Panc1 (cell line): ENCODE measurements at regions of chr7 and their contacts with region 1.

Region 1: DNA sequence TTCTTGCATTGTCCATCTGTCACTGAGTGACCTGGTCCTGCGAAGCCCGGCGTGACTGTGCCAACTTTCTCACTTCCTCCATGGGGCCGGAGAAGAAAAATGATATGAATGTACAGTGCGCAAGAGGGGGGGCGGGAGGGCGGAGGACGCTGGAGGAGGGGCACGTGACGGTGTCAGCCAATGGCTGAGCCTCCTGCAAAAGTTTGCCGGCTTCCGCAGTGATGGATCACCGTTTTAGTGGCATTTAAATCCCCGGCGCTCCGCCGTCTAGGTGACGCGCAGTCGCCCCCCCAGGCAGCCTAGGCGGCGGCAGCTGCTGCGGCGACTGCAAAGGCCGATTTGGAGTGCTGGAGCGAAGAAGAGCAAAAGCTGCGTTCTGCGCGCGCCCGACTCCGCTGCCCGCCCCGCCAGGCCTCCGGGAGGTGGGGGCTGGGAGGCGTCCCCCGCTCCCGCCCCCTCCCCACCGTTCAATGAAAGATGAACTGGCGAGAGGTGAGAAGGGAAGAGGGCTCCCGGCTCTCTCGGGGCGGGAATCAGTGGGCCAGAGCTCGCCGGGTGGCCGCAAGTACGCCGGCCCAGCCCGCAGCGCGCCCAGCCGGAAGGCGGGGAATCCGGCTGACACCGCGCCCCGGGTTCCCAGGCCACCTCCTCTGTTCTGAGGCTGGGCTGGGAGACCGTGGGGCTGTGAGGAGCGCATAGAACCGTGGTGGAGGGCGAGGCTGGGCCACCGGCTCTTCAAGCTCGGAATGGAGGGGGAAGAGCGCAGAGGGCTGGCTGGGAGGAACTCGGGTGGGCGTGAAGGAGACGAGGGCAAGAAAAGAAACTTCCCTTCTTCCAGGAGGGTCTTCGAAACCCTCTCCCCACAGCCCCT is at the start of gene HOXA1:
- DNase-seq: no peak
- ATAC-seq: peak; percentile 84
- H3K4me3 ChIP-seq: peak within 1 kb of the TSS; percentile 85 to 93
- H3K27ac ChIP-seq: peak within 1 kb of the TSS; percentile 99
- H3K4me1 ChIP-seq: peaks cover 60% of the 10 kb centered on the region
- H3K27me3 ChIP-seq: no peaks in the 10 kb centered on the region
- CTCF ChIP-seq: no peak; the same call in 1 of the 2 replicates
- total RNA-seq, gene HOXA1: 8.8 TPM

Region 2: DNA sequence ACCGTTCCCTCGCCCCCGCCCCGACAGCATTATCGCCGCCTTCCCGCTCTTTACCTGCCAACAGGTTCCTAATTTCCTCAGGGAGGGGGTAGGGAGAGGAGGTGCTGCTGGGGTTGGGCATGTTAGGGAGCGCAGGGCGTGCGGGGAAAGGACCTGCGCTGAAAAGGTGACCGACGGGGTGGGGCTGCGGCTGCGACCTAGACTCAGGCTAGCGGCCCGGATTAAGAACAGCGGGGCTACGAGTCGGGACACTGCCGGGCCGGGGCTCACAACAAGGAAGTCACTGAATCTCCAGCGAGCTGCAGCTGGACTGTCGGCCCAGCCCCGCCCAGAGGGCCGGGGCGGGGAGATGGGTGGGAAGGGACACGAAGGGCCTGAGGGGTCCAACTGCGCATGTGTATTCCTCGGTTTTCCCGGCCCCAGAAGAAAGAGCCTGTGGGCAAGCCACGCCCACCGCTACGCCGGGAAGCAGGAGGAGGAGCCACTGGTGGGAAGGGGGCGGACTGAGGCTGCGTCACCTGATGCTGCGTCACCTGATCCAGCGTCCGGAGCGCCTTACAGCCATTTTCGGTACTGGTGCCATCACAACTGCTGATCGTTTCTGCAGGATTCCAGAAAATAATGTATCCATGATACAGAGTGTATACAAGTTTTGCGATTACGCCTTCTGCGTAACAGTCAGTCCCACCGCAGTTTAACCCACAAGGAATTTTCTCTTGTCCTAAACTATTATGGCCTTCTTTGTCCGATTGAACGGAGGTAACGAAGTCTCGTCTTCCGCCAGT is 231.6 kb before region 1 on chr7 and contains the start of gene SKAP2:
- CTCF ChIA-PET with region 1: interaction called, 7 read pairs
- POLR2A ChIA-PET with region 1: interaction called, 4 read pairs
- in situ Hi-C with region 1: no loop called
- intact Hi-C with region 1: loop called (anchors 2 kb)
- DNase-seq: peak; percentile 98
- ATAC-seq: peak; percentile 98
- H3K4me3 ChIP-seq: peak within 1 kb of the TSS; percentile 84 to 96
- H3K27ac ChIP-seq: peak within 1 kb of the TSS; percentile 95
- H3K4me1 ChIP-seq: peaks cover 34% of the 10 kb centered on the region
- H3K27me3 ChIP-seq: no peaks in the 10 kb centered on the region
- CTCF ChIP-seq: no peak
- total RNA-seq, gene SKAP2: 66.8 TPM

Region 3: GRCh38 chr7:26948617-26949118 is 147.5 kb before region 1 on chr7:
- CTCF ChIA-PET with region 1: no interaction called
- POLR2A ChIA-PET with region 1: no interaction called
- in situ Hi-C with region 1: no loop called
- intact Hi-C with region 1: no loop called
- DNase-seq: no peak
- ATAC-seq: no peak
- H3K4me3 ChIP-seq: no peak overlapping the region
- H3K27ac ChIP-seq: no peak overlapping the region
- H3K4me1 ChIP-seq: no peaks in the 10 kb centered on the region
- H3K27me3 ChIP-seq: 0 out of 2 replicates have a peak, but pooled peaks cover 6% of the 10 kb centered on the region
- CTCF ChIP-seq: no peak

Region 4: GRCh38 chr7:27031289-27032172 is 64.6 kb before region 1 on chr7:
- CTCF ChIA-PET with region 1: interaction called, 5 read pairs
- POLR2A ChIA-PET with region 1: no interaction called
- in situ Hi-C with region 1: no loop called
- intact Hi-C with region 1: loop called (anchors 10 kb)
- DNase-seq: no peak
- ATAC-seq: no peak
- H3K4me3 ChIP-seq: no peak overlapping the region
- H3K27ac ChIP-seq: no peak overlapping the region
- H3K4me1 ChIP-seq: no peaks in the 10 kb centered on the region; the same call in 1 of the 2 replicates
- H3K27me3 ChIP-seq: no peaks in the 10 kb centered on the region
- CTCF ChIP-seq: no peak

Region 5: DNA sequence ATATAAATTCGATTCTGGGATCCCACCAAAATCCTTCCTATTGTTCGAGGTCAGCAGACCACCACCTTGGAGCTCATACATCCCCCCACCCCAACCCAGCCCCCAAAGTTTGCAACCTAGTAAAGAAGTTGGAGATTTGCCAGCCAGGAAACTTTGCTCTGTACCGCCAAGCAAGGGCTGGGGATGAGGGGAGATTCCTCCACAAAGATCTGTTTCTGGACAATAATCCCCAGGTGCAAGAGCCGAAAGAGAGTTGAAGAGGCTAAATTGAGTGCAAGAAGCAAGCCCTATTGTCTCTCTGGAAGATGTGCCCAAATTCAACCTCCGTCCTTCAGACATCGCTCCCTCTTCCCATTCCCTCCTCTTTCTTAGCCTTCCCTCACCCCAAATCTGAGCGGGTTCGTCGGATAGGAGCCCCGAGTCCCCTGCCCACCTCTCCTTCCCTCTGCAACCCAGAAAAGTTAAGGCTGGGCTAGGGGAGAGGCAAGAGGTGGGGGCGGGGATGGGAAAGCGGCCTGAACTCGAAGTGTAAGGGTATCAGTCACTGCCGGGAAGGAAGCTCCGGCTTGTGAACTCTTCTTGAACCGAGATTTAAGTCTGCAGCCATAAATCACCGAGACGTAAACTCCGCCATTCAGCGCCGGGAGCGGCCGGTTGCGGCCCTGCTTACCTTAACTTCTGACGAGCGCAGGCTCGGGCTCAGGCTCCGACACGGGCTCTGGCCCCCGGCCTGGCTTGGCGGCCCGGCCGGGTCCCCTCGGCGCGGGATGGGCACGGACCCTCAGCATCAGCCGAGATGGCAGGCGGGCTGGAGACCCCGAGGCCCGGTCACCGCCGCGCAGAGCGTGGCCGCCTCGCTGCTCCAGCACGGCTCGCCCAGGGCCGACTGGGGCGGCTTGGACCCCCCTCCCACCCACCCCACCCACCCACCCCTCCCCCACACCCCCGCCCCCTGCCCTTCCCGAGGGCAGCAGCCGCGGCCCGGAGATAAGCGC is 17.1 kb after region 1 on chr7:
- CTCF ChIA-PET with region 1: interaction called, 5 read pairs
- POLR2A ChIA-PET with region 1: interaction called, 21 read pairs
- in situ Hi-C with region 1: no loop called
- intact Hi-C with region 1: no loop called
- DNase-seq: no peak
- ATAC-seq: peak; percentile 12
- H3K4me3 ChIP-seq: peak overlapping the region; percentile 77 to 92
- H3K27ac ChIP-seq: peak overlapping the region; percentile 100
- H3K4me1 ChIP-seq: peaks cover 58% of the 10 kb centered on the region
- H3K27me3 ChIP-seq: no peaks in the 10 kb centered on the region
- CTCF ChIP-seq: no peak

Region 6: GRCh38 chr7:28378574-28379149 is 1282.5 kb after region 1 on chr7:
- CTCF ChIA-PET with region 1: no interaction called
- POLR2A ChIA-PET with region 1: no interaction called
- in situ Hi-C with region 1: no loop called
- intact Hi-C with region 1: no loop called
- DNase-seq: no peak
- ATAC-seq: no peak
- H3K4me3 ChIP-seq: no peak overlapping the region
- H3K27ac ChIP-seq: no peak overlapping the region
- H3K4me1 ChIP-seq: no peaks in the 10 kb centered on the region
- H3K27me3 ChIP-seq: peaks cover 5% of the 10 kb centered on the region; the same call in 1 of the 2 replicates
- CTCF ChIP-seq: no peak